Heart left ventricle (tissue), 16 donors: ENCODE measurements at regions of chr22 and their contacts with region 1.

Region 1: DNA sequence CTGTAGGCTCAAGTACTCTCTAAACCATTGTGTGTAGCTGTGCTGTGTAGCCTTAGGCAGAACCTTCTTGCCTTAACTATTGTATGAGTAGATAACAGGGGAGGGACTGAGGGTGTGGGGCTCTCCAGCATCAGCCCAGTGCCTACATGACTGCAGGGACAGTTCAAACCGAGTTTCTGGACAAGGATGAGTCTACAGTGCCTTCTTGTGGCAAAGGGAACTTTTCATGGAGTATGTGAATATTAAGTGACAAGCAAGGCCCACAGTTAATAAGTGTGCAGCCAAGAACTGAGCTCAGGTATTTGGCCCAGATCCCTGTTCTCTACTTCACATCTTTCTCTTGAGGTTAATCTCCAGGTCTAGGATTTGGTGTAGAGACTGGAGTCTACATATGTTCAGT is 424.4 kb upstream of the LARGE1 start:
- DNase-seq: no peak
- ATAC-seq: peak; percentile 36 to 61 (median 50)
- H3K4me3 ChIP-seq: no peak overlapping the region
- H3K27ac ChIP-seq: no peak overlapping the region
- H3K4me1 ChIP-seq: no peaks in the 10 kb centered on the region
- H3K27me3 ChIP-seq: peaks cover 0 to 5% (median 0%) of the 10 kb centered on the region in 9 donors
- CTCF ChIP-seq: peak in 6 of 12 donors; percentile 20 to 43 (median 25)
- POLR2A ChIP-seq: no peak

Region 2: DNA sequence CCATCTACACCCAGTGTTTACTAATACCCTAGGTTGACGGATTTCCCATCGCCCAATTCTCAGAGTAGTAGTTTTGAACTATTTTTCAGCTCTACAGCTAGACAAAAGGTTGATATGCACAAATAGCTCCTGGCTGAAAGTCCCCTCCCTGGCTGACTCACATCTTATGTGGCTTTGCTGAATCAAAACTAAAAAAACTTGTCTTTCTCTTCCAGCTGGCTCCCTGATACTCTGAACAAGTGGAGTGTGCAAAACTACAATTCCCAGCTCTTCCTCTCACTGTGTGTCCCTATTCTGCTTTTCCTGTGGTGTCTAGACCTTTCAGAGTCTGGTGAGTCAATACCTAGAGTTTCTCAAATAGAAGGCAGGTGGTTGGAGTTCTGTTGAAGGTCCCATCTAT is 411.7 kb before region 1 on chr22:
- intact Hi-C with region 1: loop called in 7 of 10 experiments (anchors 10 kb)
- DNase-seq: no peak
- ATAC-seq: no peak
- H3K4me3 ChIP-seq: no peak overlapping the region
- H3K27ac ChIP-seq: no peak overlapping the region
- H3K4me1 ChIP-seq: no peaks in the 10 kb centered on the region
- H3K27me3 ChIP-seq: no peaks in the 10 kb centered on the region
- CTCF ChIP-seq: no peak
- POLR2A ChIP-seq: no peak

Region 3: DNA sequence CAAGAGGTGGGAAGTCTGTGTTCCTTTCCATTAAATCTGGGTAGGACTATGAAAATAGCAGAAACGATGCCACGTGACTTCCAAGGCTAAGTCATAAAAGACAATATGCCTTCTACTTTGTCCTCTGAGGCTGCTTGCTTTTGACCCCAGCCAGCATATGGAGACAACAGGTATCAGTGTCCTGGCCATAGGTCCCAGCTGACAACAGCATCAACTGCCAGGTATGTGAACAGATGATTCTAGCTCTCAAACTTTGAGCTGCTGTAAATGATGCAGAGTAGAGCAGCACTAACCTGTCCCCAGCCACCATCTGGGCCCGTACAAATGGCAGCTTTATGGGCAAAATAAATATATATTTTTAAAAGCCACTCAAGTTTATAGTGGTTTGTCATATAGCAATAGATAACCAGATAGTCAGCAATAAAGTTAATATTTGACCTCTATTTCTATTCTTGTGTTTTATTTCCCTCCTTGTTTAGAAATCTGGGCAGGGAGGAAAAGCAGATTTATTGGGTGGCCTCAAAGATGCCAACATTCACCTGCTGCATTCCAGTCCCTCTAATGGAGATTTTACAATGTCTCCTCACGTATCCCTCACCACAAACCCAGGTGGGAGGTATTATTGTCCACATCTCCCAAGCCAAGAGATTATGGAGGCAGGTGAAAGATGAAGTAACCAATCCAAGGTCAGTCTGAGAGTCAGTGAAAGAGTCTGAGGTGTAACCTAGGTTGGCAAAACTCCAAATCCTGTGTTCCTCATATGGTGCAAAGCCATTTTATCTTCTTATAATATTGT is 214.8 kb before region 1 on chr22:
- intact Hi-C with region 1: loop called in 1 of 10 experiments (anchors 10 kb)
- DNase-seq: no peak
- ATAC-seq: no peak
- H3K4me3 ChIP-seq: no peak overlapping the region
- H3K27ac ChIP-seq: no peak overlapping the region
- H3K4me1 ChIP-seq: peaks cover 0 to 8% (median 0%) of the 10 kb centered on the region in 12 donors
- H3K27me3 ChIP-seq: peaks cover 0 to 7% (median 0%) of the 10 kb centered on the region in 9 donors
- CTCF ChIP-seq: no peak
- POLR2A ChIP-seq: no peak